GM10248 (cell line): ENCODE measurements at regions of chr14 and their contacts with region 1.

Region 1: DNA sequence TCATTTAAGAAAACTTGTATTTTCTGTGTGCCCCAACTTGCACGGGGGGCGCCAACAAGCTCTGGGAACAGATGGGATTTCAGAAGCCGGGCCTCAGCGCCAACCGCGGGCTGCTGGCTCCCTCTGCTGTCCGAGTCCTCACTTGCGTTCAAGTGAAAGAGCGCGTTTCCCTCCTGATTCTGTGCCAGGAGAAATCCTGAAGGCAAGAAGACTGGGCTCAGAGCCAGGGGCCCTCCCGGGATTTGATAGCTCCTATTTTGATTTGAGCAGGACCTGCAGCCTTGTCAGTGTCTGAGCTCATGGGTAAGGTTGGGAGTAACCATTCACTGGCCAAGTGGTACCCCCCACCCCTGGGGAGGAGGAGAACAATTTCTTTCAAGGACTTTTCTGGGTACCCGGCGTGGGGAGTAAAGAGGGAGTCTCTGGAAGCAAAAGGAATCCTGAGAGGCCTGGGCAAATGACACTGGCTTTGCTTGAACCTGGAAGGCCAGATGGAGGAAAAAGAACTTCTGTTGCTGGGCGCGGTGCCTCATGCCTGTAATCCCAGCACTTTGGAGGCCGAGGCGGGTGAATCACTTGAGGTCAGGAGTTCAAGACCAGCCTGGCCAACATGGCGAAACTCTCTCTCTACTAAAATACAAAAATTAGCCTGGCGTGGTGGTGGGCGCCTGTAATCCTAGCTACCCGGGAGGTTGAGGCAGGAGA is 179.0 kb upstream of the RGS6 start:
- DNase-seq: peak; percentile 85
- CTCF ChIP-seq: peak; percentile 86

Region 2: GRCh38 chr14:71103662-71104484 is 649.4 kb before region 1 on chr14:
- CTCF ChIA-PET with region 1: interaction called, 33 read pairs
- POLR2A ChIA-PET with region 1: no interaction called
- DNase-seq: peak; percentile 65
- CTCF ChIP-seq: peak; percentile 73

Region 3: GRCh38 chr14:71138448-71139293 is 614.6 kb before region 1 on chr14:
- CTCF ChIA-PET with region 1: interaction called, 177 read pairs
- POLR2A ChIA-PET with region 1: no interaction called
- DNase-seq: peak; percentile 78
- CTCF ChIP-seq: peak; percentile 91

Region 4: DNA sequence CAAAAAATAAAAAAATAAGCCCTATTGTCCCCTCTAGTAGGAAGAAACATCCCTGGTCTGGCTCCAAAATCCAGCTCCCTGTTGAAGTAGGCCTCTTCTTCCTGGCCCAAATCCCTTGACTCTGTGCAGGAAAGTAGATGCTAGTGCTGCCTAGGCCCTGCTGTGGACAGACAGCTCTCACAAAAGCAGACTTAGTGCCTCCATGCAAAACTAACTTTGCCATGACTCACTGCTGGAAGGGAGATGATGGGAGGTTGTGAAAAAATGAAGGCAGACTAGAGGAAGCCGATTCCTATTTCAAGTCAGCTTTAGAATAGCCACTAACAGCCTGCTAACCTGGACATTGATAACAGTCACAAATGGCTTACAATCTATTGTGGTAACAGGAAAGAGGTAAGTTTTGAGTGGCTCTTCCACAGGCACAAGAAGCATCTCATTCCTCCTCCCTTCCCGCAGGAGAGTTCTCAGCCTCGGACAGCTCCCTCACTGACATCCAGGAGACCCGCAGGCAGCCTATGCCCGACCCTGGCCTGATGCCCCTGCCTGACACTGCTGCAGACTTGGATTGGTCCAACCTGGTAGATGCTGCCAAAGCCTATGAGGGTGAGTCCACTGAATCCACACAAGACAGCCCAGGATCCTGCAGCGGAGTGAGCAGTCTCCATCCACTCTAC is 19.9 kb before region 1 on chr14:
- CTCF ChIA-PET with region 1: interaction called, 23 read pairs
- POLR2A ChIA-PET with region 1: no interaction called
- DNase-seq: no peak
- CTCF ChIP-seq: no peak

Region 5: GRCh38 chr14:71764701-71765382 is 11.6 kb after region 1 on chr14:
- CTCF ChIA-PET with region 1: interaction called, 28 read pairs
- POLR2A ChIA-PET with region 1: no interaction called
- DNase-seq: no peak
- CTCF ChIP-seq: no peak

Region 6: DNA sequence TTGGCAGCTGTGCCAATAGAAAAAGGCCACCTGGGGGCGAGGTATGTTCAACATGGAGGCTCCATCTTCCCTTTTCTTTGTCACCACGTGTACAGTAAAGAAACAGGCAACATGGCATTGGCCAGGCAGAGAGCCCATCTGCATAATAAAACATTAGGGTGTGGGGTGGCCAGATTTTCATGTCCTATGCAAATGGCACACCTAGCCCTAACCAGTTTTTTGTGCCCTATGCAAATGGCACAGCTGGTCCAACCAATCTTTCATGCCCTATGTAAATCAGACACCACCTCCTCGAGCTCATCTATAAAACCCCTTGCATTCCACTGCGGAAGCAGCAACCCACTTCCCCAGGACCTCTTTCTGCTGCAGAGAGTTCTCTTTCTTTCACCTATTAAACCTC is 29.8 kb after region 1 on chr14:
- CTCF ChIA-PET with region 1: no interaction called
- POLR2A ChIA-PET with region 1: no interaction called
- DNase-seq: no peak
- CTCF ChIP-seq: no peak

Region 7: DNA sequence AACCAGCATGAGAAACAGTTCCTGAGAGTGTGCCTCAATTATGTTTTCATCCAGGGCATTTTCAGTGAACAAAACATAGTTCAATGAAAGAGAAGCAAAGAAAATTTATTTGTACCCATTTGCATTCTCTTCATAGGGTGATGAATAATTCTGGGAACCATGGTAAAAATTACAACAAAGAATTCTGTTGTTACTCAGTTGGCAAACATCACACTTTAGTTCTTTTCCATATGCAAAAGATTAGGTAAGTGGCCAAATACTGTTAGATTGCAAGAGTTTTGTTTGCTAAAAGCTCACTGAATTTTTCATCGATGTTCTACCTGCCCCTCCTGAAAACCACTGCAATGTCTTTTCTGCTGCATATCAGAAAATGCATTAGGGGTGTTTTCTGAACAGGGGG is 46.6 kb after region 1 on chr14:
- CTCF ChIA-PET with region 1: no interaction called
- POLR2A ChIA-PET with region 1: no interaction called
- DNase-seq: no peak
- CTCF ChIP-seq: no peak